ENCODE measurements at regions of chr19 and their contacts with region 1.

Region 1: DNA sequence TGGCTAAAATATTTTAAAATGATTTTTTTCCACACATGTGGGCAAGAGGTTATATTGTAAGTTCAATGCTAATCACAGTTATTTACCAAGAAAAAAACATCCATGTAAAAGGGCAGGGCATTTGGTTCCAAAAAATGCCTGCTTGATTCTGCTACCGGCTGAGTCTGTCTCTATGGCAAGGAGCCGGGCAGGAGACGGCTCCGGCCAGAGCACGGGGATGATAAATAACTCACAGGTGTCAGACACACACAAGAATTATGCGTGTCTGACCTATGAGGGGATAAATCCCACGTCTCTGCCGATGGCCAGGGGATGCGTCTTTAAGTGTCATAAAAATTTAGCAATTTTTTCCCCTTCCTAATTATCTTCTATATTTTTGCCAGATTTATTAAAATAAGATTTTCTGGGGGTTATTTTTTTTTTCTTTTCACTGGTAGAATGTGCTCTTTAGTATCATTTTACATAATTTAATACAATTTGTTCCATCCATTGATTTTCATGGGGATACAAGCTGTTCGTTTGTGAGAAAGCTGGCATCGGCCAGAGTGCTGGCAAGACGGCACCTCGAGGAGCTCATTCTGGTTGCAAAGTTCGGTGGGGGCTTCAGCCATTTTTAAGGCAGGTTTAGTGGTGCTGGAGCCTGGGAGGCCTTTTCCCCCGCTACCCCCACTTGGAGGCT is 253.9 kb downstream of the ZNF536 start:
- DNase-seq: no peak

Region 2: DNA sequence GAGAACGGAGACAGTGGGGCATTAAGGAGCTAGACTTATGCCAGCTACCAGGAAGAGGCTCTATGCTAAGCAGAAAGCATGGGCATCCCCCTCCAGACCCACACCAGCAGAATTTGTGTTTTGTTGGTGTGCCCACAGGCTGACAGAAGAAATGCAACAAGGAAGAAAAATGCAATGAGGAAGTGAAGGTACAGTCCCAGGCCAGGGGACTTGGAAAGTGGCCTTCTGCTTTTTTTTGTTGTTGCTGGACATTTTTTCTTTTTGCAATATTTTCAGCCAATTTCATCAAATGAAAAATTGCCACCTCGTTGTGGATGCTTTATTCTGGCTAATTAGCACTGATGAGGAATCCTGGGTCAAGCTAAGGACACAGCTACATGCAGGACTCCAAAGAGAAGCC is 555.4 kb after region 1 on chr19:
- intact Hi-C with region 1: loop called in 1 of 2 experiments (anchors 5 kb)
- DNase-seq: no peak